ENCODE measurements at regions of chr6 and their contacts with region 1.

Region 1: DNA sequence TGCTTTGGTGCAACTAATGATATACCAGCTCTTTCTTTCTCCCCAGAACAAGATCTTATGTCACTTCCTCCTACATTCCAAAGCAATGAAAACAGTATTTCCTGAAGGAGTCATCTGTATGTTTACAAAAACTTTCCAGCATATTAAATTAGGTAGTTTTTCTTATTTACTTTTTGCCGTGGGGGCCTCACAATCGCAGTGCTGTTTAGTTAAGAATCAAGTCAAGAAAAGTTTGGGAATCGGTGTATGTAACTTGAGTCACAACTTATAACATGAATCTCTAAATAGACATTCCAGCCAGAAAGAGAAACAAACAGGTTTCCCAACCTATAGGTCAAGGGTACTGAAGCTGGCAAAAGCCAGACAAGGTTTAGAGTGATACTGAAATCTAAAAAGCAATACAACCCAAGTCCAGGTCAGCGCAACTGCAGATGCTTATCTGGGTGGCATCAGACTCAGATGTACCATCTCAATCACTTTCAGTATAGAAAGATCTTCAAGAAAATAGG is 63.7 kb downstream of the IPCEF1 start:
- DNase-seq: peak; percentile 7 to 94
- H3K4me3 ChIP-seq: peak overlapping the region; percentile 44; the same call in 1 of the 2 replicates
- H3K27ac ChIP-seq: peak overlapping the region; percentile 94
- H3K4me1 ChIP-seq: peaks cover 51% of the 10 kb centered on the region
- H3K27me3 ChIP-seq: no peaks in the 10 kb centered on the region
- CTCF ChIP-seq: no peak

Region 2: GRCh38 chr6:152804150-152804549 is 1488.8 kb before region 1 on chr6:
- CTCF ChIA-PET with region 1: no interaction called
- POLR2A ChIA-PET with region 1: no interaction called
- intact Hi-C with region 1: no loop called
- DNase-seq: no peak
- H3K4me3 ChIP-seq: no peak overlapping the region
- H3K27ac ChIP-seq: no peak overlapping the region
- H3K4me1 ChIP-seq: no peaks in the 10 kb centered on the region
- H3K27me3 ChIP-seq: no peaks in the 10 kb centered on the region
- CTCF ChIP-seq: no peak

Region 3: DNA sequence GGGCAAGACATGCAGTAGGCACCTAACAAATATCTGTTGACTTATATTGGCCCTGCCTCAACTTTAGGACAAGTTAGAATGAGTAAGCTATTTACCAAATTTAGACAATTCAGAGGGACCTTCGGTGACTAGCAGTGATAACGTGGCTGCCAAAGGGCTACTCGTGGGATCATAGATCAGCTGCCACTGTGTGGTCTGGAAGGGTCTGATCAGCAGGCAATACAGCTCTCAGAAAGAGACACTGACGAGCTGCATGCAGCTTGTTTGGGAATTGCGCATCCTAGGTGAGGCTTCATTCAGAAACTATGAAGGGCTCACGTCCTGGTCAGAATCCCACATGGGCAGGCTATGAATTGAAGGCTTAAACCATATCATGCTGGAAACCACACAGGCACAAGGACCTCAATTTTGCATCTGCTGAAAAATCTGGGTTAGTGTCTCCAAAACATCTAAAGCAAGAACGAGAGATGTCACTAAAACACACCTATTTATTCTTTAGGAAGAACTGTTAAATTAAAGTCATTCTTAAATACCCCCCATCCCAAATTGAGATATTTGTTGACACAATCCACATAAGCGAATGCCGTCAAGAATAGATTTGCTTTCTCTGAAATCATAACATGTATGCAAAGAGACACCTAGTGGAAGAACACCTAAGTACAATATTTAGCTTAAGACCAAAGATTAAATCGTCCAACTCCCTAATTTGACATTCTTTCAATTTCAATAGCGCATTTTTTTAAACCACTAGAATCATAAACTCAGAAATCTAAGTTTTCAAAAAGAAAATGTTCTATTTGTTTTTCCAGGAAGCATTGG is 15.9 kb before region 1 on chr6:
- CTCF ChIA-PET with region 1: no interaction called
- POLR2A ChIA-PET with region 1: interaction called, 10 read pairs
- intact Hi-C with region 1: no loop called
- DNase-seq: peak in 1 of 2 experiments; percentile 40
- H3K4me3 ChIP-seq: no peak overlapping the region
- H3K27ac ChIP-seq: no peak overlapping the region
- H3K4me1 ChIP-seq: no peaks in the 10 kb centered on the region
- H3K27me3 ChIP-seq: no peaks in the 10 kb centered on the region
- CTCF ChIP-seq: peak; percentile 68

Region 4: DNA sequence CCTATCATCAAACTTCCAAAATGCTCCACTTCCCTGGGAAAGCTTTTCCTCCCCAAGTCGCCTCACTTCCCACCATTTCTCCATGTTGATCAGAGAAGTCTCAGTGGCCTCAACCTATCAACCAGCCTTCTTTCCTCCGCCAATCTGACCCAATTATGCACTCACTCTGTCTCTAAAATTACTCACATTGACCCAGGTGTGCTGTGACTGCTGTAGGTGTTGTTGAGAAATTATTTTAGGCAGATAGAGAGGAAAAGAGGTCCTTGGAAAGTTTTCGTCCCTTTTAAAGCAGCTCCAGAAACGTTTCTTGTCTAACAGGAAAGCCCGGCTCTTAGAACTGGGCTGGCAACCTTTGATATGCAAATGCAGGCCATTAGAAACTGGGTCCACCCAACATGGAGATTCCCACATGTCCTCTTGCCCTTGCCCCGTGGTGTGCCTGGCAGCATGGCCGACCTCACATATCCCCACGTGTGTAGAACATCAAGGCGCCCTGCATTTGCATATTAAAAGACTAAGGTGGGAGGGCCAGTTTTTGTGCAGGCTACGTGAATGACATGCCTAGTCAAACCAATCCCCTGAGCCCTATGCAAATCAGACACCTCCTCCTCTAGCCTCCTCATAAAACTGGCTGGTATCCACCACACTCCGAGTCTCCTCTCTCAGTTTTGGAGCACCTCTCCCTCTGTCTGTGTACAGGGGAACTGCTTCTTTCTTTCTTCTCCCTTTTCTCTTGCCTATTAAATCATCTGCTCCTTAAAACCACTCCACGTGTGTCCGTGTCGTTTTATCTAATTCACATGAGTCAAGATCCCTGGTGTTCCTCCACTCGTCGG is 50.7 kb after region 1 on chr6:
- CTCF ChIA-PET with region 1: no interaction called
- POLR2A ChIA-PET with region 1: no interaction called
- intact Hi-C with region 1: loop called (anchors 5 kb)
- DNase-seq: peak; percentile 76 to 92
- H3K4me3 ChIP-seq: peak overlapping the region; percentile 42; the same call in 1 of the 2 replicates
- H3K27ac ChIP-seq: peak overlapping the region; percentile 38
- H3K4me1 ChIP-seq: 0 out of 2 replicates have a peak, but pooled peaks cover 4% of the 10 kb centered on the region
- H3K27me3 ChIP-seq: no peaks in the 10 kb centered on the region
- CTCF ChIP-seq: peak; percentile 70

Measured in PC-9 (cell line).